SK-N-SH (cell line): ENCODE measurements at regions of chr1 and their contacts with region 1.

Region 1: DNA sequence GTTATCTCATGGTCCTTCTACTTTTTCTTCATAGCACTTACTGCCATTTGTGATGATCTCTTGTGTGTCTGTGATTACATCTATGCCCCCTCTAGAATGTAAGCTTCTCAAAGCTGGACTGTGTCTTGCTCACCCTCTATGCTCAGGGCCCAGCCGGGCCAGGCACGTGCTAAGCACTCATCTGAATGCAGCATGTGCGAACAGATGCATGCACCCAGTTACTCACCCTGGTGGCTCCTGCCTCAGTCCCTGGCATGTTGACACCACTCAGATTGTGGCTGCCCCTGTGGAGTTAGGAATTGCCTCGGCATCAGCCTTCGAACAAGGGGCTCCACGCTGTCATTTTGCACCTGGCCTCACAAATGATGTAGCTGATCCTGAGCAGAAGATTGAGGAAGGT is 19.6 kb upstream of the PABPC4 start:
- DNase-seq: no peak
- H3K4me3 ChIP-seq: no peak overlapping the region
- H3K27ac ChIP-seq: no peak overlapping the region
- H3K4me1 ChIP-seq: no peaks in the 10 kb centered on the region; a peak in 1 of 4 replicates
- H3K27me3 ChIP-seq: peaks cover 6% of the 10 kb centered on the region; the same call in 1 of the 2 replicates
- CTCF ChIP-seq: no peak
- EP300 ChIP-seq: no peak
- RAD21 ChIP-seq: no peak

Region 2: DNA sequence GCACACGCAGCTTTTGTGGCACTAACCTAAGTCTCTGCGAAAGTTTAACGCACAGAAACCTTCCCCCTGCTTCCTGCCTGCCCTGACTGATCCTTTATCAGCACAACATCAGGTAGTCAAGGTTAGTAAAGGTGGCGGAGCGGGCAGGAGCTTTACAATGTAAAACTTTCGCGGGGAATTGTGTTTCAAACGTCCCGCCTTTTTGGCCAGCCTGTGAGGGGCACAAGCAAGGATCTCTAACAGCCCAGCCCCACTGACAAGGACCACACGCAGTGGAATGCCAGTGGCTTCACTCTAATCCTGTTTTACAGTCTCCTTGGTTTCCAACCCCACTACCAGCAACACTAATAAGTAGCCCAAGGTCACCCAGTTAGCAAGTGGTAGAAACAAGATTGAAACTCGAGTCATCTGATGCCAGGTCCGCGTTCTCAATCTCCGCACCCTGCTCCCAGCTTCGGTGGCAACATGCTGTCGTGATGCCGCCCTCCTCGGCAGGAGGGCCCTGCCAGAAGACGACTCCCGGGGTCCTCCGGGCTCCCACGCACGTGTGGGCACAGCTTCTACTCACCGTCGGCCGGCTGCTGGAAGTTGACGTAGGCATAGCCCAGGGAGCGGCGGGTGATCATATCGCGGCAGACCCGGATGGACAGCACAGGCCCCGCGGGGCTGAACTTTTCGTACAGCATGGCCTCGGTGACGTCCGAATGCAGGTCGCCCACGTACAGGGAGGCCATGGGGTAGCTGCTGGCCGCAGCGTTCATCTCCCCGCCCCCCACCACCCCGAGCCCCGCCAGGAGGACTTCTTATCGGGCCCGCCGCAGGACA is 20.8 kb before region 1 on chr1:
- CTCF ChIA-PET with region 1: interaction called, 22 read pairs
- POLR2A ChIA-PET with region 1: interaction called, 4 read pairs
- DNase-seq: peak; percentile 76
- H3K4me3 ChIP-seq: peak overlapping the region; percentile 75 to 89
- H3K27ac ChIP-seq: peak overlapping the region; percentile 65 to 74; a peak in 3 of 4 replicates
- H3K4me1 ChIP-seq: peaks cover 14 to 22% of the 10 kb centered on the region in 2 experiments
- H3K27me3 ChIP-seq: no peaks in the 10 kb centered on the region
- CTCF ChIP-seq: no peak
- EP300 ChIP-seq: no peak
- RAD21 ChIP-seq: no peak

Region 3: DNA sequence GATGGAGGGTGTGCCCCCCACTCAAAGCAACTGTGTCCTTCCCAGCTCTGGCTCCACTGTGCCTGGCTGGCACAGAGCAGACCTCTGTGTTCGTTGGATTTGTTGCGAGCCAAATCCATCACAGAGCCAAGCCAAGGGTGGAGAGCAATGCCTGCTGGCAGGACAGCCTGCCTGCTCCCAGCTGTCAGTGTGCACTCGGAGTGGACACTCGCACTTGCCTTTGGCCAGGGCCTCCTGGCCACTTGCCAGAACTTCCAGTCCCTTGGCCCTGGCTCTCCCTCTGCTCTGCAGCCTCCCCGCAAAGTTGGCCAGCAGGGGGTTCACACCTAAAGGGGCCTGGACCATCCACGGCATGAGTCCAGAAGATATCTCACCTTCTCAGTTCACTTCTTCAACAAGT is 26.9 kb after region 1 on chr1:
- CTCF ChIA-PET with region 1: no interaction called
- POLR2A ChIA-PET with region 1: no interaction called
- DNase-seq: peak; percentile 45
- H3K4me3 ChIP-seq: no peak overlapping the region
- H3K27ac ChIP-seq: no peak overlapping the region
- H3K4me1 ChIP-seq: peaks cover 0 to 29% of the 10 kb centered on the region in 2 experiments; a peak in 1 of 4 replicates
- H3K27me3 ChIP-seq: peaks cover 4% of the 10 kb centered on the region
- CTCF ChIP-seq: no peak
- EP300 ChIP-seq: no peak
- RAD21 ChIP-seq: no peak

Region 4: GRCh38 chr1:39788426-39788757 is 192.2 kb after region 1 on chr1:
- CTCF ChIA-PET with region 1: no interaction called
- POLR2A ChIA-PET with region 1: no interaction called
- DNase-seq: peak; percentile 77
- H3K4me3 ChIP-seq: peak overlapping the region in 1 of 2 experiments; percentile 47; a peak in 2 of 4 replicates
- H3K27ac ChIP-seq: no peak overlapping the region; a peak in 1 of 4 replicates
- H3K4me1 ChIP-seq: peaks cover 0 to 5% of the 10 kb centered on the region in 2 experiments; a peak in 1 of 4 replicates
- H3K27me3 ChIP-seq: peaks cover 16% of the 10 kb centered on the region
- CTCF ChIP-seq: no peak
- EP300 ChIP-seq: no peak
- RAD21 ChIP-seq: no peak